Thyroid gland (tissue), 4 donors: ENCODE measurements at regions of chr9 and their contacts with region 1.

Region 1: DNA sequence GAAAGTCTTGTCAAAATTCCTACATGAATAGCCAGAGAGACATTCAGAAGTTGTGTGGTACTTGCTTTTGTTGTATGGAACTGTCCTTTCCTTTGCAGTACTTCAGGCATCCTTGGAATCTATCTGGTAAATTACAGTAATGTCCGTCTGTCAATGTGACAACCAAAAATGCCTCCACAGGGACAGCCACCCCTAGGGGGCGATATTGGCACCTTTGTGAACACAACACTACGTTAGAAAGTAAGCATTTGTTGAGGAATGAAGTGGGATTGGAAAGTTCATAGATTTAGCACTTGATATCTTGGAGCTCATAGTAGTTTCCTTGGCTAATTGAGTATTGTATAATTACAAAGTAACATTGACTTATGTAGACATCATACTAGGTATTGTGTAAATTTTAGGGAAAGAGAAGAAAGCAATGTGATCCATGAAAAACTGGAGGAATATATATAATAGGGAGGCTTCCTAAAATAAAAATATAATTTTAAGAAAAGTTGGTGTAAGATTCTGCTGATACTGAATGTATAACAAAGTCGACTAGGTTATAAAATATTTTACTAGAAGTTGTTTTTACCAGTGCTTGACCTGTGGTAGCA is 32.7 kb downstream of the TMEFF1 start:
- DNase-seq: peak; percentile 79 to 91
- H3K4me3 ChIP-seq: no peak overlapping the region
- H3K27ac ChIP-seq: no peak overlapping the region
- H3K4me1 ChIP-seq: no peaks in the 10 kb centered on the region
- H3K27me3 ChIP-seq: no peaks in the 10 kb centered on the region
- CTCF ChIP-seq: peak; percentile 32 to 74 (median 64)
- POLR2A ChIP-seq: no peak

Region 2: GRCh38 chr9:100206899-100207298 is 298.8 kb before region 1 on chr9:
- intact Hi-C with region 1: no loop called
- DNase-seq: no peak
- H3K4me3 ChIP-seq: no peak overlapping the region
- H3K27ac ChIP-seq: no peak overlapping the region
- H3K4me1 ChIP-seq: no peaks in the 10 kb centered on the region
- H3K27me3 ChIP-seq: no peaks in the 10 kb centered on the region
- CTCF ChIP-seq: no peak
- POLR2A ChIP-seq: no peak

Region 3: GRCh38 chr9:100561256-100561655 is 55.6 kb after region 1 on chr9:
- intact Hi-C with region 1: no loop called
- DNase-seq: no peak
- H3K4me3 ChIP-seq: no peak overlapping the region
- H3K27ac ChIP-seq: no peak overlapping the region
- H3K4me1 ChIP-seq: peaks cover 14 to 16% of the 10 kb centered on the region in 2 donors
- H3K27me3 ChIP-seq: no peaks in the 10 kb centered on the region
- CTCF ChIP-seq: no peak
- POLR2A ChIP-seq: no peak

Region 4: DNA sequence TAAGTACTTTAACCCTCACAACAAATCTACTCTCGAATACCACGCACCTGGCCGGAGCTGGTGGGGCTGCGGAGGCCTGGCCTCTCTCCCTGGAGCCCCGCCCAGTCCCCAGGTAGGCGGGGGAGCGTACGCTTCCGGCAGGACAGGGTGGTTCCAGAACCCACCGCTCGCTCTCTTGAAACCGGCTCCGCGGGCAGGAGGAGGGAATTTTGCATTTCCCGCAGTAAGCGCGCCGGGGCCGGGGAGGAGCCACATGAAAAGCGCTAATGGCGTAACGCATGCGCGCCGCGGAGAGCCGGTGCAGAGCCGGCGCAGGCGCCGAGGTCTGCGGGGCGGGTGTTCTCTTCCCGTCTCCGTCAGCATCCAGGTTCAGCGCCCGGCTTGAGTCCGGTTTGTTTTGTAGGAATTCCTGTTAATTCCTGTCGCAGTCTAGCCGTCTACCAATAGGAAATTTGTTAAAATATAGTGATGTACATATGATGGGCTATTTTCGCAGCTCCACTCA is 93.0 kb after region 1 on chr9:
- intact Hi-C with region 1: loop called (anchors 10 kb)
- DNase-seq: peak; percentile 89 to 92
- H3K4me3 ChIP-seq: peak overlapping the region in 2 of 3 donors; percentile 16 to 25
- H3K27ac ChIP-seq: peak overlapping the region; percentile 18 to 51 (median 20)
- H3K4me1 ChIP-seq: peaks cover 0 to 4% of the 10 kb centered on the region in 2 donors
- H3K27me3 ChIP-seq: no peaks in the 10 kb centered on the region
- CTCF ChIP-seq: no peak
- POLR2A ChIP-seq: peak in 1 of 2 donors; percentile 39